Aorta (tissue), 5 donors: ENCODE measurements at regions of chr2 and their contacts with region 1.

Region 1: GRCh38 chr2:188381614-188382013 is 89.9 kb downstream of the GULP1 start:
- DNase-seq: no peak
- ATAC-seq: no peak
- H3K4me3 ChIP-seq: no peak overlapping the region
- H3K27ac ChIP-seq: no peak overlapping the region
- H3K4me1 ChIP-seq: peaks cover 0 to 3% of the 10 kb centered on the region in 2 donors
- H3K27me3 ChIP-seq: no peaks in the 10 kb centered on the region

Region 2: DNA sequence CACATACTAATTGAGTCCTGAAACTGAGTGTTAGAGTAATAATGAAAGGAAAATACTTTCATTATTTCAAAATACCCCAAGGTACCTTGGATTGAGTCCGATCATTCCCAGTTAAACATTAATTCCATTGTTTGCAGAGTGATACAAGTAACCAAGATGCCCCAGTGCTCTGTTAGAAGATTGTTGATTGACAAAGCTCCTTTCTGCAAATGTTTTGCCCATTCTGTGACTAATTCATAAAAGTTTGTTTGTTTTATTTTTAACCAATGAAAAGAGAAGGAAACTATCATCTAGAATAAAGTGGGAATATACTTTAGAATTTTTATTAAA is 34.1 kb after region 1 on chr2:
- intact Hi-C with region 1: loop called in 1 of 2 experiments (anchors 5 kb)
- DNase-seq: no peak
- ATAC-seq: no peak
- H3K4me3 ChIP-seq: no peak overlapping the region
- H3K27ac ChIP-seq: no peak overlapping the region
- H3K4me1 ChIP-seq: no peaks in the 10 kb centered on the region
- H3K27me3 ChIP-seq: no peaks in the 10 kb centered on the region

Region 3: DNA sequence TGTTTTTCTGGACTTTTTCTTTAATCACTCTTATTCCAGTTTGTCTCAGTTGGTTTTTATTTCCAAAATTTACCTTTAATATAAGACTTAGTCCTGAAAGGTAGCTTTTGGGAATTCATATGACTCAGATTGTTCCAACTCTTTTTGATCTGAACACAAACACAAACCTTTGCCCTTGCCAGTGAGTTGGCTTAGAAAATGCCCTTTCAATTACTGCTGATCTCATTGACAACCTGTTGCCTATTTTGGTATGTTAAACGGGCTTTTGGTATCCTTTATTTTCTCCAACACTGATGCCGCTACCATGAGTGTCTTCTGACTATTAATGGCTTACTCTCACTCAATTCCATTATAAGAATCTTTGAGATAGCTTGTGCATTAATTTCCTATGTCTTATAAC is 53.5 kb after region 1 on chr2:
- intact Hi-C with region 1: no loop called
- DNase-seq: no peak
- ATAC-seq: no peak
- H3K4me3 ChIP-seq: no peak overlapping the region
- H3K27ac ChIP-seq: no peak overlapping the region
- H3K4me1 ChIP-seq: no peaks in the 10 kb centered on the region
- H3K27me3 ChIP-seq: no peaks in the 10 kb centered on the region

Region 4: DNA sequence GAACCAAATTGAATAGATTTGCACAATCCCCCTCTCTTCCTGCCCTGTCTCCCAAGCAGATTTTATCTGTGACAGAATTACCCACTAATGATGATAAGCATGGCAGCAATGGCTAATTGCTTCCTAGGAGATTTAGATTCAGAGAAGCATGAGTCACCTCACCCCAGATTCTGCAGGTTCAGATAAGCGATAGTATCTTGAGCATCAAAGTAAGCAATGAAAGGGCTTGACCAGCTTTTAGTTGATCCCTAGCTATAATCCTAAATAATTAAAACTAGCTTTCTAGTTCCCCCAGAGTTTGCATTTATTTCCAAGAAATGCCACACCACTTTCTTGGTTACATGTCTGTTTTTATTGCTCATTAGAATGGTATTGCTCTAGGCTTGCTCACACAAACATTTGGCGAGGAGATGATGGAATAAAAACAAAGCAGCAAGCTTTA is 114.4 kb after region 1 on chr2:
- intact Hi-C with region 1: loop called in 1 of 2 experiments (anchors 10 kb)
- DNase-seq: no peak
- ATAC-seq: no peak
- H3K4me3 ChIP-seq: no peak overlapping the region
- H3K27ac ChIP-seq: peak overlapping the region in 1 of 2 donors; percentile 59
- H3K4me1 ChIP-seq: peaks cover 0 to 2% of the 10 kb centered on the region in 2 donors
- H3K27me3 ChIP-seq: no peaks in the 10 kb centered on the region